Posterior vena cava (tissue), 2 donors: ENCODE measurements at regions of chrX and their contacts with region 1.

Region 1: DNA sequence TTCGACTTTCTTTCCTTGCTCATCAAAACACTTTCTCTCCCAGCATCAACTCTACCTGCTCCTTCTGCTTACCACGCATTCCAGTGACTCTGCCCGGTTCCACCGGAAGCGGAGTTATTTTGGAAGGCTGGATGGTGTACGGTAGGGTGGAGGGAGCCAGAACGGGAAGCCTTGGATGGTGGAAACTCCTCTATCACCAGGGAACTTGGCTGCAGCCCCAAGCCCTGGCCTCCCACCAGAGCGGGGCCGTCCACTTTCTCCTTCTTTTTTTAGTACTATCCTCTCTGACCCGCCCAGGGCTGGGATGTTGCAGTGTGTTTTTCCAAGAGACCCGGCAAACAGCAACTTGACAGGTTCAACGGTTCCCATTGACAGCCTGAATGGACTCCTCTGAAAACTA is 27.6 kb downstream of the ADGRG2 start:
- DNase-seq: no peak

Region 2: DNA sequence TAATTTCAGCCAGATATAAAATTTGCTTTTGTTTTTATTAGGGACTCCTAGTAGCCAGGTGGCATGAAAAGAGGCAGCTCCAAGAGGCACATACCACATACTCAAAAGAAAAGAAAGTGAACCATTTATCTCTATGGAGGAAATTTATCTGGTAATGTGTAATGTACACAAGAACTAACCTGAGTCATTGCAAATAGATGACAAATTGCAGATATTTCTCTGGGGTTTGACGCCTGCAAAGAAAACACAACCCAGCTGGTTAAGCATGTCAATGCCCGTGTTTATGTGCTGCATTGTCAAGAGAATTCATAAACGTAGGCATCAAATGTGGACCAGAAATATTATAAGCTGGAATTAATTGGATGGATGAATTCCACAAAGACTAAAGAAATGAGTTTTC is 63.8 kb before region 1 on chrX:
- intact Hi-C with region 1: no loop called
- DNase-seq: no peak

Region 3: GRCh38 chrX:19046343-19047215 is 48.1 kb before region 1 on chrX:
- intact Hi-C with region 1: no loop called
- DNase-seq: no peak

Region 4: GRCh38 chrX:19172741-19173140 is 78.1 kb after region 1 on chrX:
- intact Hi-C with region 1: loop called in 1 of 2 experiments (anchors 2 kb)
- DNase-seq: no peak